Activated T-helper 1 cell treated with anti-CD3 and anti-CD28 coated beads, Interleukin-12 subunit alpha, Interleukin-12 subunit beta, Interleukin-2, Interleukin-4 antibody, amounts not matched to agents 30 ng/mL and 10 ng/mL and 1 ng/mL, durations not matched to agents 14 hours and 24 hours and 36 hours (primary cell): ENCODE measurements at regions of chr2 and their contacts with region 1.

Region 1: DNA sequence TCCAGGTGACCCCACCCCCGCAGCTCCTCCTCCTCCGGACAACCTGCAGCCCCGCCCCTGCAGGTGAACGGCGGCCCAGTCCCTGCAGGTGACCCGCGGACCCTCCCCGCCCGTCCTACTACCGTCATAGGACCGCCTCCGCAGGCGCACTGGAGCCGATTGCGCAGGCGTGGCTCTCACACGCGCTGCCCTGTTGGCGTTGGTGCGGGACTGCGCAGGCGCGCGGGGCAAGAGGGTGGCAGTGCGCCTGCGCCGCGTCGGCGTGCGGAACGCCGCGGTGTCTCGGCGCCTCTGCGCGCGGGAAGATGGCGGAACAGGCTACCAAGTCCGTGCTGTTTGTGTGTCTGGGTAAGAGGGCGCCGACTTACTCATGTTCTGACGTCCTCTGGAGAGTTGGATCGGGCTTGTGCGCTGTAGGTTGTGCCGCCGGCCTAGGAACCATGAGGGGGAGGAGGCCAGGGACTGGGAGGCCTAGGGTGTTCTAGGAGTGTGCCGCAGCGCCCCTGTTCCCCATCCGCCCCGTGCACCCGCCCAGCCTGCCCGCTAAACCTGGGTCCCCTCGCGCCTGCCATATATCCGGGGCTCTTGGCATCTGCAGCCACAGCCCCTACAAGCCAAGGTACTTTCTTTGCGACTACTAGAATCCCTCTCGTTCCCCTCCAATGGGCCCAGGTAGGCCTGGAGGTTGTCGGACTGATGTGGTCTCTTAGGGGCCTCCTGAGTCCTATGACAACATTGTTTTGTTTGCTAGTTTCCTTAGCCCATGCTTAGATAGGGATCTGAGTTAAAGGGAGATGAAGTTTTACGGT is at the start of gene ACP1:
- DNase-seq: peak; percentile 94
- H3K4me3 Mint-ChIP-seq: peak within 1 kb of the TSS; percentile 94
- H3K27ac Mint-ChIP-seq: peak within 1 kb of the TSS; percentile 94
- H3K4me1 Mint-ChIP-seq: peaks cover 47% of the 10 kb centered on the region
- H3K27me3 Mint-ChIP-seq: no peaks in the 10 kb centered on the region
- total RNA-seq, gene ACP1: 124 and 133 TPM in 2 replicates

Region 2: GRCh38 chr2:246489-247144 is 18.2 kb before region 1 on chr2:
- intact Hi-C with region 1: loop called (anchors 2 kb)
- DNase-seq: no peak
- H3K4me3 Mint-ChIP-seq: no peak overlapping the region
- H3K27ac Mint-ChIP-seq: no peak overlapping the region
- H3K4me1 Mint-ChIP-seq: no peaks in the 10 kb centered on the region
- H3K27me3 Mint-ChIP-seq: no peaks in the 10 kb centered on the region

Region 3: GRCh38 chr2:317501-318424 is 52.9 kb after region 1 on chr2:
- intact Hi-C with region 1: loop called (anchors 2 kb)
- DNase-seq: peak; percentile 11
- H3K4me3 Mint-ChIP-seq: peak overlapping the region; percentile 45
- H3K27ac Mint-ChIP-seq: peak overlapping the region; percentile 82
- H3K4me1 Mint-ChIP-seq: peaks cover 23% of the 10 kb centered on the region
- H3K27me3 Mint-ChIP-seq: peaks cover 8% of the 10 kb centered on the region

Region 4: DNA sequence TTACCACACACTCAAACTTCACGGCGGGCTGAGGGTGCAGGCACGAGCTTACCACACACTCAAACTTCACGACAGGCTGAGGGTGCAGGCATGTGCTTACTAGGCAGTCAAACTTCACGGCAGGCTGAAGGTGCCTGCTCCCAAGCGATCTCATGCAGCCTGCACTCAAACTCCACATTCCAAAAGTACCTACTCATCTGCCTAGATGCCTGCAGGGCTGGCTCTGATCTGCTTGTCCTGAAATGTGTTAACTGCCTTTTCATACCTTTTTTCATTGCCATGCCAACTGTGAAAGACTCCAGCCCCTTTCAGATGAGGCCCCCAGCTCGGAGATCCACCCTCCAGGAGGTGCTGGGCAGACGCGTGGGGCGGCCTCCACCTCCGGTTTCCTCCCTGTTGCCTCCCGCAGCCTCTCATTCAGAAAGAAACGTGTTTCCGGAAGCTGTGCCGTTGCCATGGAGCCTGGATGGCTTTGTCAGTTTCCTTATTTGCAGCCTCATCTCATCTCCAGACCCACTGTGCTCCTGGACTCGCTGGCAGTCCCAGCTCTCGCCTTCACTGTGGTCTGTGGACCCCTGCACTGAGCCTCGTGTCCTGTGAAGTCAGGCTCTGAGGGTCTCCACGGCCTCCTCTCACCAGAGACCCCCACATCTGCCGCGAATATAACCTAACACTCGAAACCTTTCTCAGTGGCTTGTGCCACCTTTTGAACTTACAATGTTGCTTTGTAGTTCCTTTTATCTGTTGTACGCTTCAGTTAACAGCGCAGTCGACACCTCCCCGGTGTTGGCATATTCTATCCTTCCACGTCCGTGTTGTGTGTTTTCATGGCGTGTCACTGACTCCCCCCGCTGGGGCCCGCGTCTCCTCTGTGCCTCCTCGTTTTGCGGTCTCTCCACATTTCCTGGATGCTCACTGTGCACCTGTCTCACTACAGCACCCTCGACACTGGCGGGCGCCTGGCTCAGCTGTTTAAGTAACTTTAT is 129.1 kb after region 1 on chr2:
- intact Hi-C with region 1: loop called (anchors 2 kb)
- DNase-seq: peak; percentile 68
- H3K4me3 Mint-ChIP-seq: peak overlapping the region; percentile 73
- H3K27ac Mint-ChIP-seq: peak overlapping the region; percentile 76
- H3K4me1 Mint-ChIP-seq: peaks cover 11% of the 10 kb centered on the region
- H3K27me3 Mint-ChIP-seq: peaks cover 3% of the 10 kb centered on the region

Region 5: GRCh38 chr2:429575-430254 is 164.9 kb after region 1 on chr2:
- intact Hi-C with region 1: loop called (anchors 5 kb)
- DNase-seq: no peak
- H3K4me3 Mint-ChIP-seq: peak overlapping the region; percentile 49
- H3K27ac Mint-ChIP-seq: peak overlapping the region; percentile 55
- H3K4me1 Mint-ChIP-seq: peaks cover 32% of the 10 kb centered on the region
- H3K27me3 Mint-ChIP-seq: peaks cover 4% of the 10 kb centered on the region

Region 6: DNA sequence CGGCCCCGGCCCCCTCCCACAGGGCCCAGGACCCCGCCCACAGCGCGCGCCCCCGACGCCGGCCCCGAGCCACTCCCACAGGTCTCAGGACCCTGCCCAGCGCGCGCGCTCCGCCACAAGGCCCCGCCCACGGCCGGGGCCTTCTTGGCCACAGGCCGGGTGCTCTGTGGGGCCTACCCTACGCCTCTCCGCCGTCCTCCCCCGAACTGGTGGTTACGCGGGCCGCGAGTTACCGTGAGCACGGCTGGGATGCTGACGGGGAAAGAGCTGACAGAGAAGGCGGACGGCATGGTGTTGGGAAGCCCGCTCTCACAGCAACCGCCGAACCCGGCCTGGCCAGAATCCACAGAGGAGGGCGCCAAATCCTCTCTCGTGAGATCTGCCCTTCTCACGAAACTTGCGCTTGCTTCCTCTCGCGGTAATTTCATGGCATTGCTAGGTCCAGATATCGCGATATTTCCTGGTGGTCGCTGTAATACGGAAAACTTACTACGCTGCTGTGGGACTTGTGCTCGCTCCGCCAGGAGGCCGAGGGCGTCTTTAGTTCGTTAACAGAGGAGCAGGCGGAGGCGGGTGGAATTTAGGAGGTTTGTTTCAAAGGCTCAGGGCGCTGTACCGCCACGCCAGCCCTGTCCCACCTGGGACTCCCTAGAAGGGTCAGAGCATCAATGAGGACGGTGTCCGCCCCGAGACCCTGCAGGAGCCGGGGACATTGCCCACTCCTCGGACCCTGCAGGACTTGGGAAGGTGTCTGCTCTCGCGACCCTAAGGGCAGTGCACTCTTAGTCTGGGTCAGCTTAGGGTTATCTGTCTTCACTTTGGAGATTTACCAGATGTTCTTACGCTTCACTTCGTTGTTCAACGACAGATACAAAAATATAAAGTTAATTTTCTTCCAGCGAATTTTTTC is 412.4 kb after region 1 on chr2 and contains the start of gene TMEM18:
- intact Hi-C with region 1: loop called (anchors 1 kb)
- DNase-seq: peak; percentile 88
- H3K4me3 Mint-ChIP-seq: peak within 1 kb of the TSS; percentile 94
- H3K27ac Mint-ChIP-seq: peak within 1 kb of the TSS; percentile 97
- H3K4me1 Mint-ChIP-seq: peaks cover 42% of the 10 kb centered on the region
- H3K27me3 Mint-ChIP-seq: peaks cover 2% of the 10 kb centered on the region
- total RNA-seq, gene TMEM18: 23.3 and 24.9 TPM in 2 replicates

Region 7: GRCh38 chr2:1203772-1204171 is 938.9 kb after region 1 on chr2:
- intact Hi-C with region 1: no loop called
- DNase-seq: no peak
- H3K4me3 Mint-ChIP-seq: no peak overlapping the region
- H3K27ac Mint-ChIP-seq: no peak overlapping the region
- H3K4me1 Mint-ChIP-seq: no peaks in the 10 kb centered on the region
- H3K27me3 Mint-ChIP-seq: no peaks in the 10 kb centered on the region